Gastrocnemius medialis (tissue), 4 donors: ENCODE measurements at regions of chr12 and their contacts with region 1.

Region 1: DNA sequence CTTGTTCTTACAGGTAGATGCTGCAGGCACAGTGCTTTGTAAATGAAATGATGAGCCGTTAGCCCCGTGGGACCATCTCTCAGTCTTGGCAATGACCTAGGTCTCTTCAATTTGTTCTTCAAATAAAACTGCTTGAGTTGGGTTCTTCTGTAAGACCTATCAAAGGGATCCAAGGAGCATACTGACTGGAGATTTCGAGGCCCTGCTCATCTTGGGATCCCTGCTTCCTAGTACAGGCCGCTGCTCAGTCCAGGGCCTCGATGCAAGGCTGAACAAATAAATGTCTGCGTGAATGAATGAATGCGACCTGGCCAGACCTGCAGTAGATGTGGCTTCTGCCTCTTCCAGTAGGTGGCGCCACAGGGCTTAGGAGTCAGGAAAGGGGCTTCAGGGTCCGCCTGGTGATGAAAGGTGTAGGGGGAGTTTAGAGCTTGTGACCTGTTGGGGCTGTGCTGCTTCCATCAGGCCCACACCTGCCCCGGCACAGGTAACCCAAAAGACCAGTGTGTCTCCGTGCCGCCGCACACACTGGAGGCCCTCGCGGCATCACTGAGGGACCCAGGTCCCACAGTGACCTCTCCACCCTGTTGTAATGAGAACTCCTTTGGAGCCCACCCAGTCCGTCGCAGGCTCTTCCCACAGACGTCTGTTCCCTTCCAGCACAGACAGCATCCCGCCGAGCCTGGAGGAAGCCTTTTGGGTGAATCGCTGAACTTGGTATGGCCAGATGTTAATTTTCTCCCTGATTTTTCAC is 4.4 kb downstream of the CACNA1C start:
- DNase-seq: peak in 1 of 2 donors; percentile 25
- ATAC-seq: no peak
- H3K4me3 ChIP-seq: no peak overlapping the region
- H3K27ac ChIP-seq: no peak overlapping the region
- H3K4me1 ChIP-seq: peaks cover 5 to 6% of the 10 kb centered on the region in 2 donors
- H3K27me3 ChIP-seq: peaks cover 32 to 38% (median 34%) of the 10 kb centered on the region in 3 donors
- CTCF ChIP-seq: peak; percentile 55 to 74 (median 72)
- POLR2A ChIP-seq: no peak

Region 2: DNA sequence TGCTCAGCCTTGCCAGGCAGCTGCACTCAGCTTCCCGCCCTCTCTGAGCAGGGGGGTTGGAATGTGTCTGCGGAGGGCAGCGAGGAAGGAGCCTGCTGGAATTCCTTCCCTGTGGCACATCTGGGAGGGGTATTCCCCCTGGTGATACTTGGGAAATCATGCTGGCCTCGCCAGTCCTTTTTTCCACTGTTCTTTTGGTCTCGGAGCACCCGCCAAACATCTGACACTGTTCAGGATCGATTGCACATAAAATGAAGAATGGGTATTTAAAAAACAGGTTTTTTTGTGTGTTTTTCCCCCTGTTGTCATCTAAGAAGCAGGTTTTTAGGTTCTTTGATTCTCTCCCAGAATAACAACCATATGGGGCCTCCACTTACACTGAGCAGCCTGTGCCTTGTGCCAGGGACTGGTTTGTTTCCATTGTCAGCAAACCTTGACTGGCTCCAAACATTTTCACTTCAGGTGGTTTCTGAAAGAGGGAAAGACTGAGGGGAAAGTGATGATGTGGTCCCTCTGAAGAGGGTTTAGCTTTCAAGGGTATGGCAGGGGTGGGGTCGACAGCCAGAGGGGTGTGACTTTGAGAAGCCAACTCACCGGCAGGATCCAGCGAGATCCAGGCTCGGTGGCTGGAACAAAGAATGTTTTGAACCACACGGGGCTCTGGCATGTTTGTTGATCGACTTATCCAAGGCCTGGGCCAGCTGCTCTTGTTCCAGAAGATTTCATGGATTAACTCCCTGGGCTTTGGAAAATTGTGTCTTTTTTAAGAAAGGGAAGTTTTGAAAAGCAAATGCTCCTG is 210.7 kb after region 1 on chr12:
- in situ Hi-C with region 1: loop called in 1 of 4 experiments (anchors 25 kb)
- intact Hi-C with region 1: loop called (anchors 10 kb)
- DNase-seq: peak; percentile 29 to 67
- ATAC-seq: peak in 1 of 2 donors; percentile 37
- H3K4me3 ChIP-seq: no peak overlapping the region
- H3K27ac ChIP-seq: peak overlapping the region in 2 of 4 donors; percentile 38 to 43
- H3K4me1 ChIP-seq: no peaks in the 10 kb centered on the region
- H3K27me3 ChIP-seq: peaks cover 13 to 23% (median 16%) of the 10 kb centered on the region in 3 donors
- CTCF ChIP-seq: no peak
- POLR2A ChIP-seq: no peak

Region 3: GRCh38 chr12:2284857-2285256 is 227.6 kb after region 1 on chr12:
- in situ Hi-C with region 1: loop called in 1 of 4 experiments (anchors 10 kb)
- intact Hi-C with region 1: no loop called
- DNase-seq: peak in 1 of 2 donors; percentile 48
- ATAC-seq: peak; percentile 51 to 52
- H3K4me3 ChIP-seq: no peak overlapping the region
- H3K27ac ChIP-seq: no peak overlapping the region
- H3K4me1 ChIP-seq: peaks cover 12 to 16% of the 10 kb centered on the region in 2 donors
- H3K27me3 ChIP-seq: peaks cover 0 to 9% (median 2%) of the 10 kb centered on the region in 3 donors
- CTCF ChIP-seq: peak in 4 of 5 experiments; percentile 27 to 53 (median 44)
- POLR2A ChIP-seq: no peak

Region 4: GRCh38 chr12:2583091-2583497 is 525.9 kb after region 1 on chr12:
- in situ Hi-C with region 1: loop called (anchors 5 to 10 kb)
- intact Hi-C with region 1: loop called (anchors 1 kb)
- DNase-seq: peak in 1 of 2 donors; percentile 28
- ATAC-seq: peak; percentile 45 to 76
- H3K4me3 ChIP-seq: peak overlapping the region in 1 of 4 donors; percentile 36
- H3K27ac ChIP-seq: no peak overlapping the region
- H3K4me1 ChIP-seq: peaks cover 0 to 3% of the 10 kb centered on the region in 2 donors
- H3K27me3 ChIP-seq: peaks cover 2 to 34% (median 12%) of the 10 kb centered on the region in 3 donors
- CTCF ChIP-seq: peak; percentile 65 to 91 (median 81)
- POLR2A ChIP-seq: no peak